ENCODE measurements at regions of chr19 and their contacts with region 1.

Region 1: GRCh38 chr19:51473009-51473707 is 5.2 kb upstream of the CEACAM18 start:
- DNase-seq: peak; percentile 88
- H3K4me3 ChIP-seq: no peak overlapping the region
- H3K27ac ChIP-seq: no peak overlapping the region
- H3K4me1 ChIP-seq: peaks cover 0 to 16% (median 1%) of the 10 kb centered on the region in 6 donors
- H3K27me3 ChIP-seq: peaks cover 0 to 32% (median 4%) of the 10 kb centered on the region in 7 donors
- CTCF ChIP-seq: peak; percentile 50 to 92 (median 83)
- POLR2A ChIP-seq: no peak

Region 2: GRCh38 chr19:51660975-51661600 is 187.9 kb after region 1 on chr19:
- intact Hi-C with region 1: loop called (anchors 2 kb)
- DNase-seq: peak; percentile 90
- H3K4me3 ChIP-seq: no peak overlapping the region
- H3K27ac ChIP-seq: no peak overlapping the region
- H3K4me1 ChIP-seq: peaks cover 3 to 27% (median 8%) of the 10 kb centered on the region in 6 donors
- H3K27me3 ChIP-seq: peaks cover 0 to 51% (median 13%) of the 10 kb centered on the region in 7 donors
- CTCF ChIP-seq: peak; percentile 33 to 76 (median 56)
- POLR2A ChIP-seq: no peak

Region 3: GRCh38 chr19:51777570-51778462 is 304.7 kb after region 1 on chr19:
- intact Hi-C with region 1: loop called (anchors 5 kb)
- DNase-seq: peak; percentile 84
- H3K4me3 ChIP-seq: peak overlapping the region in 1 of 8 donors; percentile 6
- H3K27ac ChIP-seq: peak overlapping the region in 2 of 8 donors; percentile 60 to 73
- H3K4me1 ChIP-seq: peaks cover 0 to 30% (median 8%) of the 10 kb centered on the region in 6 donors
- H3K27me3 ChIP-seq: peaks cover 0 to 49% (median 0%) of the 10 kb centered on the region in 7 donors
- CTCF ChIP-seq: peak; percentile 45 to 90 (median 71)
- POLR2A ChIP-seq: no peak

Region 4: GRCh38 chr19:52065399-52065798 is 592.2 kb after region 1 on chr19:
- intact Hi-C with region 1: no loop called
- DNase-seq: no peak
- H3K4me3 ChIP-seq: peak overlapping the region in 1 of 8 donors; percentile 34
- H3K27ac ChIP-seq: no peak overlapping the region
- H3K4me1 ChIP-seq: no peaks in the 10 kb centered on the region
- H3K27me3 ChIP-seq: no peaks in the 10 kb centered on the region
- CTCF ChIP-seq: no peak
- POLR2A ChIP-seq: no peak

Measured in spleen (tissue), 13 donors.